WTC11 (cell line): ENCODE measurements at regions of chr5 and their contacts with region 1.

Region 1: DNA sequence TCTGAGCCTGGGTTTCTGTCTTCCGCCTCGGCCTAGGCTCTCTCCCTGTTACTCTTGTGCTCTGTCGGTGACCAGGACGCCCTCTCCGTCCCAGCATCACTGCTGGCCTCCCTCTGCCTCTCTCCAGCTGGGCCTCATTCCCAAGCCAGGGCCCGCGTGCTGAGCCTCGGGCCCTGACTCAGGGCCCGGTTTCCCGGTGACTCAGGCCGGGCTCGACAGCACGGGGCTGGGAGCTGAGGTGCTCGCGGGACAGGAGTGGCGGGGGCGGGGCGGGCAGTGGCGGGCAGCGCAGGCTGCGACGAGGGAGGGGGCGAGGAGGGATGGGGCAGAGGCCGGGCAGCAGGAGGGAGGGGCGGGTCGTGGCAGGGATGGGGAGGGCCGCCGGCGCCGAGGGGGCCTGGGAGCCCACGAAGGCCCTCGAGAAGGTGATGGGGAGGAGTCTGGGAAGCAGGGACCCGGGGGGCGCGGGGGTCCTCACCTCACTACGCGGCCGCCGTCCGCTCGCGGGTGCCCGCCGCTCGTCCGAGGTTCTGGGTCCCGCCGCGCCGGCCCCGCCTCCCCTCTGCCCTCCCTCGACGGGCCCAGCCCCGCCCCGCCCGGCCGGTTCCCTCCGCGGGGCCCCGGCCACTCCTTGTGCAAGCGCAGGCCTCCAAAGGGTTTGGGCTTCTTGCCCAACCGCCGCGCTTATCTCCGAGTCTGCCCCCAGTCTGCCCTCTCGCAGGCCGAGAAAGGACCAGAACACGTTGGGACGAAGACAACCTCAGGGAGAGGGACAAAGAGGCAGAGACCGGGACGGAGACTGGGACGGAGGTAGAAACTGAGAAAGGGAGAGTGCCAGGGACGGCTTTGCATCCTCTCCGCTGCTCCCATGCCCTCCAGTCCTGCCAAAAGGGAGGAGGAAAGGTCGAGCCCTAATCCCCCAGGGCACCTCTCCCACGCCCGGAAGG is at the start of gene ARAP3:
- DNase-seq: peak; percentile 76
- ATAC-seq: peak; percentile 50
- H3K4me3 Mint-ChIP-seq: peak within 1 kb of the TSS; percentile 84
- H3K27ac Mint-ChIP-seq: peak within 1 kb of the TSS; percentile 96
- H3K4me1 Mint-ChIP-seq: peaks cover 50% of the 10 kb centered on the region
- H3K27me3 Mint-ChIP-seq: no peaks in the 10 kb centered on the region
- CTCF ChIP-seq: no peak
- total RNA-seq, gene ARAP3: 51.2 to 60.4 TPM (median 53.4 TPM) in 3 replicates

Region 2: DNA sequence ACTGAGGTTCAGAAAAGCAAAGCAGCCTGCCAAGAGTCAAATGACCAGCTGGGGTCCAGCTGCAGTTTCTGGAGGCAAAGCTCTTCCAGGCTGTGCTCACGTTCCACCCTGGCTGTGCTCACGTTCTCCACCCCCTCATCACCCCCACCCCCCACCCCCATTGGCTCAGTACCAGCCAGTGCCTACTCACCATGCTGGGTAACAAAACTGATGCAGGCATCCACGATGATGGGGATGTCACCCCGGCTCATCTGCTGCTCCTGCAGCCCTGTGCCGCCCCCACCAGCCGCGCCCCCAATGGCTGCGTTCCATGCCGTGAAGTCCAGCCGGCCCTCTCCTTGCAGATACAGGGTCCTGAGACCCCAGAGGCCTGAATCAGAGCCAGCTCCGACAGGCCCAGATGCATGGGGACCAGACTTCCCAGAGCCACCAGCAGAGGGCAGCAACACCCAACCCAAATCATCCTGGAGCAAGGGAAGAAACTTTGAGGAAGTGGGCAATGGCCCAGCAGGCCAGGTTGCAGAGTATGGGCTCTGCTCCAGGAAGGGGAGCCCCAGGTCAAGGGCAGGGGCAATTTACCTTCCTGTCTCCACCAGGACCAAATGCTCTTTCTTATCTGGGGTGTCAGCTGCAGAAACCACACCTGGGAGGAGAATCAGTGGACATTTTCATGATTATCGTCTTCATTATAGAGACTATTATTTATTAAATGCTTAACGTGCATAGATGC is 17.1 kb before region 1 on chr5:
- CTCF ChIA-PET with region 1: interaction called, 17 read pairs
- POLR2A ChIA-PET with region 1: interaction called, 5 read pairs
- DNase-seq: peak; percentile 88
- ATAC-seq: peak; percentile 95
- H3K4me3 Mint-ChIP-seq: no peak overlapping the region
- H3K27ac Mint-ChIP-seq: no peak overlapping the region
- H3K4me1 Mint-ChIP-seq: peaks cover 11% of the 10 kb centered on the region
- H3K27me3 Mint-ChIP-seq: no peaks in the 10 kb centered on the region
- CTCF ChIP-seq: peak; percentile 92

Region 3: GRCh38 chr5:142375944-142376411 is 694.0 kb after region 1 on chr5:
- CTCF ChIA-PET with region 1: no interaction called
- POLR2A ChIA-PET with region 1: no interaction called
- DNase-seq: no peak
- ATAC-seq: no peak; the same call in 1 of the 2 replicates
- H3K4me3 Mint-ChIP-seq: no peak overlapping the region
- H3K27ac Mint-ChIP-seq: no peak overlapping the region; the same call in 1 of the 2 replicates
- H3K4me1 Mint-ChIP-seq: peaks cover 14% of the 10 kb centered on the region
- H3K27me3 Mint-ChIP-seq: no peaks in the 10 kb centered on the region; the same call in 1 of the 2 replicates
- CTCF ChIP-seq: no peak